ENCODE measurements at regions of chr2 and their contacts with region 1.

Region 1: DNA sequence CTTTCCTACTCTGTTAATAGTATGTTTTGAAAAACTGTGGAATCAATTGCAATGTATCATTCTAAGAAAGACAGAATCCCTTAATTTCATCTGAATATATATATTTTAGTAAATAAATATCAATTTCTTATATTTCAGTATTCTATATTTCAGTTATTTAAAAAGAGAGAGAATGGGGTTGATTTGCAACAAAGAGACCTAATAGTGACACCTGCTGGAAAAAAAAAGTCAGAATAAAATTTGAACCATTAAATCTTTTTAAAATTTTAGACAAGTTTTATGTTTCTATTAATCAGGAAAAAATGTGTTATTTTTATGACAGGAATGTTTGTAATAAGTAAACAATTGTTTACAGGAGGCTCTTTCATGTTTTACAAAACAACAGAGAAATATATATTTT is 20.7 kb upstream of the CCNT2 start:
- DNase-seq: no peak
- H3K4me3 ChIP-seq: no peak overlapping the region
- H3K27ac ChIP-seq: no peak overlapping the region
- H3K4me1 ChIP-seq: no peaks in the 10 kb centered on the region
- H3K27me3 ChIP-seq: no peaks in the 10 kb centered on the region
- CTCF ChIP-seq: peak in 1 of 4 experiments; percentile 11
- POLR2A ChIP-seq: no peak

Region 2: DNA sequence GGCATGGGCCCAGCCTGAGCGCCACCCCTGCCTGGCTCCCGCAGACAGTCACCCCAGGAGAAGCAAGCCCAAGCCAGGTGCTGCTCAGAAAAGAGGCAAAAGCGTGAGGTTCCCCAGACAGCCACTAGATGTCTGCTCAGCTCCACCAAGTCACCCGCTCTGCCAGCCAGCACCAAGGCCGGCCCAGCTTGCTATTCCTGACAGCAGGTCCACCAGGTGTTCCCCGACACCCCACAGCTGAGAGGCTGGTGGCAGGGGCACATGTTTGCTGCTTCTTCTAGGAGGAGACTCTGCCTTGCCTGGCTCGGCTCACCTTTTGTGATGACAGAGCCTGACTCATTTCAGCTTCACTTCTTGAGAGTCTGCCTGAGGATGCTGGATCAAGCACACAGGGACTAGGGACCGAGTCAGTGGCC is 437.3 kb before region 1 on chr2:
- intact Hi-C with region 1: loop called (anchors 10 kb)
- DNase-seq: peak; percentile 24
- H3K4me3 ChIP-seq: no peak overlapping the region
- H3K27ac ChIP-seq: no peak overlapping the region
- H3K4me1 ChIP-seq: no peaks in the 10 kb centered on the region
- H3K27me3 ChIP-seq: no peaks in the 10 kb centered on the region
- CTCF ChIP-seq: peak in 2 of 4 experiments; percentile 39 to 49
- POLR2A ChIP-seq: no peak

Measured in prostate gland (tissue), 2 donors.